HAP-1 (cell line): ENCODE measurements at regions of chr14 and their contacts with region 1.

Region 1: DNA sequence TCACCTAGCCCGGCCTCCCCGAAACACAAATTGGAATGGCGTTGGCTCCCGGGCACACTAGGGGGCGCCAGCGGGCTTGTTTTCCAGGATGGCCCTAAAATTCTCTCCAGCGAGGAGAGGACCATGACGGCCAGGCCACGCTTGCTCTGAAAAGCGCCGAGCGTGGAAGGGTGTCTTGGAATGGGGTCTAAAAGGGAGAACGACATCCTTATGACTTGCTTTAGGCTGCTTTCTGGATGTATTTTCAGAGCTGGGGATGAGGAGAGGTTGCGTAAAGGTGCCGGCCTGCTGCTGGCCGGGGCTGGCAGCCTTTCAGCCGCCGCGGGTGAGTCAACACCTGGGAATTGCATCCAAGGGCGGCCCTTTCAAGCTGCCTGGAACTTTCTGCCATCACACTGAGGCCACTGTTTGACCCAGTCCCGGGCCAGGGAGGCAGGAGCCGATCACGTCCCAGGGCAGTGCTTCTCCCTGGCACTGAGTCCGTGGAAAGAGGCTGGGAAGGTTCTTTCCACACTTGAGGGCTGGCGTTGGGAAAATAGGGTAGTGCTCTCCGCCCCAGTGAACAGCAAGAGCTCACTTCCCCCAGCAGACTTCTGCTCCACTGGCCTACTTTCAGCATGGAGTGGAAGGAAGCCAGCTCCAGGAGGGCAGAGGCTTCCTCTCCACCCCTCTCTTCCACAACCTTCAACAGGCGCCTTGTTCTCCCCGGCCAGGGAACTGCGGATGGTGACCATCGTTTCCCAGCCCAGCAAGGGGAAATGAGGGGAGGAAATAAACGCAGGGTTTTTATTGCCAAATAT is 216.2 kb downstream of the TTC8 start:
- DNase-seq: peak; percentile 83 to 95
- H3K4me3 ChIP-seq: peak overlapping the region; percentile 22
- H3K4me1 ChIP-seq: peaks cover 20% of the 10 kb centered on the region
- H3K27me3 ChIP-seq: no peaks in the 10 kb centered on the region

Region 2: DNA sequence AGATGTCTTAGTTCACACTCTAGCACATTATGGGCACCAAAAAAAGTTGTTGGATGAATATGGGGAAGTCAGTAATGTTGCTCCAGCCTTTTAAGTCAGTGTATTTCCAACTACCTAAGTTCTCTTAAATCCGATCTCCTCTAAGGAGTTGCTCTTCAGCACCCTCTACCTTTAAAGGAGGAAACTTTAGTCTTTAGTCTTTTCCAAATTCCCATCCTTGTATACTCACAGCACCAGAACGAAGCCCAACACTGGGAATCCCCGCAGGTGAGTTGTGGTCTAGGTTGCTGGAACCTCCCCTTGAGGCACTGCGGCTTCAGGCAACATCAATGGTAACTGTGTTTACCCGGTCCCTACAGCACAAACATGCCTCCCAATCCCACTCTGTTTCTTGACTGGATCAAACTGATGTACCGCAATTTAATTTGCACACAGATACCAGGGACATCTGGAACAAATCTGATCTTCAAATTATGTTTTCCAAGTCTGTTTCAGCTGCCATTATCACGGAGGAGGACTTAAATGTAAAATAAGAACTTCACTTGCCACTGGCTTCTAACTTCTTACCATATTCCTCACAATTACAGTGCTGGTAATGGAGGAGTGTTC is 197.4 kb after region 1 on chr14:
- in situ Hi-C with region 1: no loop called
- DNase-seq: no peak
- H3K4me3 ChIP-seq: no peak overlapping the region
- H3K4me1 ChIP-seq: no peaks in the 10 kb centered on the region
- H3K27me3 ChIP-seq: no peaks in the 10 kb centered on the region

Region 3: GRCh38 chr14:89416002-89416995 is 375.6 kb after region 1 on chr14:
- in situ Hi-C with region 1: loop called (anchors 10 kb)
- DNase-seq: peak; percentile 92 to 99
- H3K4me3 ChIP-seq: peak overlapping the region; percentile 83
- H3K4me1 ChIP-seq: peaks cover 16% of the 10 kb centered on the region
- H3K27me3 ChIP-seq: no peaks in the 10 kb centered on the region

Region 4: GRCh38 chr14:90235179-90235976 is 1194.7 kb after region 1 on chr14:
- in situ Hi-C with region 1: loop called (anchors 25 kb)
- DNase-seq: peak; percentile 61 to 83
- H3K4me3 ChIP-seq: no peak overlapping the region
- H3K4me1 ChIP-seq: no peaks in the 10 kb centered on the region
- H3K27me3 ChIP-seq: no peaks in the 10 kb centered on the region